Ascending aorta (tissue), 2 donors: ENCODE measurements at regions of chr12 and their contacts with region 1.

Region 1: DNA sequence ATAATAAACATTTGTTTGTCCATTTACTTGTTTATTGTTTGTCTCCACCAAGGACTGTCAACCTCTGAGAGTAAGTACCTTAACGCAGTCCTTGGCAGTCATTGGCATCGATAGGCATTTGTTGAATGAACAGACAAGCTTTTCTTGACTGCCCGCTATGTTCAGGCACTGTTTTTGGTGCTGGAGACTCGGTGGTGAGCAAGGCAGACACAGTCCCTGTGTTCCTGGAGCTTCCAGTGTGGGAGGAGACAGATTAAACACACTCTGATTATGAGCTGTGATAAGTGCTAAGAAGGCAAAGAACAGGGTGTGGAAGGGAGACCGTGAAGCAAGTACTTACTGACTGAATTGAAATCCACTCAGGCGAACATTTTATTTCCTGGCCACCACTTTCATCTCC is 1.2 kb downstream of the ATP6V0A2 start:
- DNase-seq: peak in 1 of 2 donors; percentile 39
- H3K4me3 ChIP-seq: peak overlapping the region; percentile 95 to 96
- H3K27ac ChIP-seq: no peak overlapping the region
- H3K4me1 ChIP-seq: peaks cover 0 to 16% of the 10 kb centered on the region in 2 donors
- H3K27me3 ChIP-seq: no peaks in the 10 kb centered on the region
- CTCF ChIP-seq: no peak

Region 2: GRCh38 chr12:122174155-122174845 is 1539.1 kb before region 1 on chr12 and contains the start of gene IL31:
- intact Hi-C with region 1: no loop called
- DNase-seq: no peak
- H3K4me3 ChIP-seq: no peak within 1 kb of the TSS
- H3K27ac ChIP-seq: no peak within 1 kb of the TSS
- H3K4me1 ChIP-seq: no peaks in the 10 kb centered on the region
- H3K27me3 ChIP-seq: no peaks in the 10 kb centered on the region
- CTCF ChIP-seq: no peak
- total RNA-seq, gene IL31: not detected

Region 3: DNA sequence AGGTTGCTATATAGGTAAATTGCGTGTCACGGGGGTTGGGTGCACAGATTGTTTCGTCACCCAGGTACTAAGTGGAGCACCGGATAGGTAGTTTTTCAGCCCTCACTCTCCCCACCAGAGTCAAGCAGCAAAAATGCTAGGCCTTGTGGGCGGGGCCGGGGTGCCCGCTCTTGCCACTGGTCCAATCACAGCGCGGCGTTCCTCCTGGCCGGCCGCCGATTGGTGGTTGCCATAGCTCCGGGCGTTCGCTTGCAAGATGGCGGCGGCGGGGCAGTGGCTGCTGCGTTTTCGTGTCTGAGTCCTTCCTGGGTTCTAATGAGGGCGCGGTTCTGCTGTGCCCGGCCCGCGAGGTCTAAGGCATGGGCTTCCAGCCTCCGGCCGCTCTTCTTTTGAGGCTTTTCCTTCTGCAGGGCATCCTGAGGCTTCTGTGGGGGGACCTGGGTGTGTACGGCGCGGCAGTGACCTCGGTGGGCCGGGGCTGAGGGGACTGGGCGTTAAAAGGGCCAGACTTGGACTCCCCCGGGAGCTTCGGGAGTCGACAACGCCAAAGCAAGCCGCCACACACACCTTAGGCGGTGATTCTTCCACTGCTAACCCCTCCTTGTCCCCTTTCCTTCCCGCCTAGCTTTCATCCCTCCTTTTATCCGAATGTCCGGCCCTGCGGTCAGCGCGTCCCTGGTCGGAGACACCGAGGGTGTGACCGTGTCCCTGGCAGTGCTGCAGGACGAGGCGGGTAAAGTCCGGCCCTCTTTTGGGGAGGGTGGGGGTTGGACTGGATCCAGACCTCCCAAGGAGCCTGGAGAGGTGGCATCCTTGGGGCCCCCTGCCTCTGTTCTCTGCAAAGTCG is 42.3 kb before region 1 on chr12 and contains the start of gene TCTN2:
- intact Hi-C with region 1: loop called (anchors 5 kb)
- DNase-seq: peak; percentile 72 to 97
- H3K4me3 ChIP-seq: peak within 1 kb of the TSS; percentile 76 to 88
- H3K27ac ChIP-seq: no peak within 1 kb of the TSS
- H3K4me1 ChIP-seq: peaks cover 6 to 13% of the 10 kb centered on the region in 2 donors
- H3K27me3 ChIP-seq: no peaks in the 10 kb centered on the region
- CTCF ChIP-seq: no peak
- total RNA-seq, gene TCTN2: 2.7 TPM

Region 4: GRCh38 chr12:123757561-123757960 is 44.2 kb after region 1 on chr12:
- intact Hi-C with region 1: loop called (anchors 5 kb)
- DNase-seq: peak; percentile 77 to 94
- H3K4me3 ChIP-seq: no peak overlapping the region
- H3K27ac ChIP-seq: peak overlapping the region; percentile 55 to 58
- H3K4me1 ChIP-seq: peaks cover 3 to 24% of the 10 kb centered on the region in 2 donors
- H3K27me3 ChIP-seq: no peaks in the 10 kb centered on the region
- CTCF ChIP-seq: no peak